IMR-90 (cell line): ENCODE measurements at regions of chr12 and their contacts with region 1.

Region 1: GRCh38 chr12:11648831-11649702 is at the start of gene ETV6:
- DNase-seq: peak; percentile 93
- ATAC-seq: peak; percentile 45
- H3K4me3 ChIP-seq: peak within 1 kb of the TSS; percentile 98
- H3K27ac ChIP-seq: peak within 1 kb of the TSS; percentile 99
- H3K4me1 ChIP-seq: peaks cover 6% of the 10 kb centered on the region
- H3K27me3 ChIP-seq: no peaks in the 10 kb centered on the region
- CTCF ChIP-seq: no peak
- POLR2A ChIP-seq: peak; percentile 64
- RAD21 ChIP-seq: peak; percentile 16; the same call in 1 of the 2 replicates
- total RNA-seq, gene ETV6: 9.4 and 9.9 TPM in 2 replicates

Region 2: DNA sequence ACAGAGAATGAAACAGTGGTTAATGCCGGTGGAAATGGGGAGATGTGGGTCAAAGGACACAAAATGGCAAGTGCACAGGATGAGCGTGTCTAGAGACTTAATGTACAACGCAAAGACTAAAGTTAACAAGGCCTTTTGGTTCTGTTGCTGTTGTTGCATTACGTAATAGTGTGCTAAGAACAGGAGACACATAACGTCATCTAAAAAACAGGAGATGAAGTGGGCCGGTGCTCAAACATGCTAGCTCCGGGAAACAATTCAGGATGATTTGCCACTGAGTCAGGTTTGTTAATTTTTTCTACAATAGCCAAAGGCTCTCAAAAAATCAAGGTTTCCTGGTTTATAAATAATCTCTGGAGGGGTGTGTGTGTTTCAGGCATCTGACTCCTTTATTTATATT is 55.9 kb after region 1 on chr12:
- CTCF ChIA-PET with region 1: no interaction called
- POLR2A ChIA-PET with region 1: no interaction called
- dilution Hi-C with region 1: no loop called
- in situ Hi-C with region 1: no loop called
- intact Hi-C with region 1: loop called (anchors 5 kb)
- DNase-seq: peak; percentile 97
- ATAC-seq: peak; percentile 81
- H3K4me3 ChIP-seq: no peak overlapping the region
- H3K27ac ChIP-seq: peak overlapping the region; percentile 13; the same call in 1 of the 2 replicates
- H3K4me1 ChIP-seq: peaks cover 26% of the 10 kb centered on the region
- H3K27me3 ChIP-seq: no peaks in the 10 kb centered on the region
- CTCF ChIP-seq: no peak
- POLR2A ChIP-seq: no peak
- RAD21 ChIP-seq: peak; percentile 31; the same call in 1 of the 2 replicates

Region 3: GRCh38 chr12:11765817-11766794 is 117.0 kb after region 1 on chr12:
- CTCF ChIA-PET with region 1: no interaction called
- POLR2A ChIA-PET with region 1: no interaction called
- dilution Hi-C with region 1: no loop called
- in situ Hi-C with region 1: no loop called
- intact Hi-C with region 1: loop called (anchors 2 kb)
- DNase-seq: peak; percentile 70
- ATAC-seq: peak; percentile 57
- H3K4me3 ChIP-seq: no peak overlapping the region
- H3K27ac ChIP-seq: peak overlapping the region; percentile 94
- H3K4me1 ChIP-seq: peaks cover 38% of the 10 kb centered on the region
- H3K27me3 ChIP-seq: no peaks in the 10 kb centered on the region
- CTCF ChIP-seq: no peak
- POLR2A ChIP-seq: no peak
- RAD21 ChIP-seq: no peak

Region 4: GRCh38 chr12:11812586-11813427 is 163.7 kb after region 1 on chr12:
- CTCF ChIA-PET with region 1: no interaction called
- POLR2A ChIA-PET with region 1: no interaction called
- dilution Hi-C with region 1: no loop called
- in situ Hi-C with region 1: no loop called
- intact Hi-C with region 1: loop called (anchors 5 kb)
- DNase-seq: peak; percentile 27
- ATAC-seq: peak; percentile 62
- H3K4me3 ChIP-seq: no peak overlapping the region
- H3K27ac ChIP-seq: peak overlapping the region; percentile 42
- H3K4me1 ChIP-seq: peaks cover 18% of the 10 kb centered on the region
- H3K27me3 ChIP-seq: no peaks in the 10 kb centered on the region
- CTCF ChIP-seq: no peak
- POLR2A ChIP-seq: no peak
- RAD21 ChIP-seq: no peak

Region 5: GRCh38 chr12:11916771-11917170 is 267.7 kb after region 1 on chr12:
- CTCF ChIA-PET with region 1: no interaction called
- POLR2A ChIA-PET with region 1: no interaction called
- dilution Hi-C with region 1: no loop called
- in situ Hi-C with region 1: no loop called
- intact Hi-C with region 1: no loop called
- DNase-seq: no peak
- ATAC-seq: no peak
- H3K4me3 ChIP-seq: no peak overlapping the region
- H3K27ac ChIP-seq: no peak overlapping the region
- H3K4me1 ChIP-seq: no peaks in the 10 kb centered on the region
- H3K27me3 ChIP-seq: peaks cover 20% of the 10 kb centered on the region
- CTCF ChIP-seq: no peak
- POLR2A ChIP-seq: no peak
- RAD21 ChIP-seq: no peak

Region 6: DNA sequence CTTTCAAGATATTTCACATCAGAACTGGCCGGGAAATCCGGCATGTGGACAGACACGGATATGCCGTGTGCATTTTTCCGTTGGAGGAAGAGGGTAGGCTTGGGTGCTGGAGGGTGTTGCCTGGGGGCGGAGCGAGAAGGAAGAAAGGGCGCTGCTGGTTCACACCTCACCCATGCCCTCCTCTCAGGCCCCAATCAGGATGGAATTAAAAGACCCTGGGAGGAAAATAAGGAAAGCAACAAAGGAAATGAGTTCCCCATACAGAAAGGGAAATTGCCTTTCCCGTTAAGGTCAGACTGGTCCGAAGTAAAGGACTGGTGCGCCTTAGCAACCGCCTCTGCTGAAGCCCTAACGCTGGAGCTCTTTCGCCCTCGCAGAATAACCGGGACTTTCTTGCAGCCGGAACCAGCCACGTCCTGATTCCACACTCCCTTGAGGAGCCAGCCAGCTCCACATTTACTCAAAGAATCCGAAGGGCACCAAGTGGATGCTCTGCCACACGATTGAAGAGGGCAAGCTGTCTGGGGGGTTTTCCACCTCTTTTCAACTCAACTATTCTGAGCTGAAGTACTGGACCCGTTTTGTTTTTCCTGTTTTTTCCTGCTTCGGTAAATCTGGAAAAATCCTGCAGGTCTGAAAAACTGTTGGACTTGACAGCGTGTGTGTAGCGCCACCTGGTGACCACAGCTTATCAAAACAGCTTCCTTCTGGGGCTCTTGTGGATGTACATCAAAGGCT is 384.0 kb after region 1 on chr12:
- CTCF ChIA-PET with region 1: no interaction called
- POLR2A ChIA-PET with region 1: no interaction called
- dilution Hi-C with region 1: no loop called
- in situ Hi-C with region 1: no loop called
- intact Hi-C with region 1: loop called (anchors 1 kb)
- DNase-seq: peak; percentile 87
- ATAC-seq: peak; percentile 92
- H3K4me3 ChIP-seq: peak overlapping the region; percentile 55
- H3K27ac ChIP-seq: peak overlapping the region; percentile 70
- H3K4me1 ChIP-seq: no peaks in the 10 kb centered on the region
- H3K27me3 ChIP-seq: peaks cover 2% of the 10 kb centered on the region
- CTCF ChIP-seq: peak; percentile 90
- POLR2A ChIP-seq: peak; percentile 58; the same call in 1 of the 2 replicates
- RAD21 ChIP-seq: peak; percentile 96